Activated CD4-positive, alpha-beta memory T cell treated with anti-CD3 and anti-CD28 coated beads for 36 hours (primary cell): ENCODE measurements at regions of chr9 and their contacts with region 1.

Region 1: GRCh38 chr9:19048966-19049916 is at the start of gene RRAGA:
- DNase-seq: peak; percentile 96
- H3K4me3 Mint-ChIP-seq: peak within 1 kb of the TSS; percentile 93
- H3K27ac Mint-ChIP-seq: peak within 1 kb of the TSS; percentile 98
- H3K4me1 Mint-ChIP-seq: peaks cover 37% of the 10 kb centered on the region
- H3K27me3 Mint-ChIP-seq: no peaks in the 10 kb centered on the region
- total RNA-seq, gene RRAGA: 43.8 to 45.5 TPM

Region 2: DNA sequence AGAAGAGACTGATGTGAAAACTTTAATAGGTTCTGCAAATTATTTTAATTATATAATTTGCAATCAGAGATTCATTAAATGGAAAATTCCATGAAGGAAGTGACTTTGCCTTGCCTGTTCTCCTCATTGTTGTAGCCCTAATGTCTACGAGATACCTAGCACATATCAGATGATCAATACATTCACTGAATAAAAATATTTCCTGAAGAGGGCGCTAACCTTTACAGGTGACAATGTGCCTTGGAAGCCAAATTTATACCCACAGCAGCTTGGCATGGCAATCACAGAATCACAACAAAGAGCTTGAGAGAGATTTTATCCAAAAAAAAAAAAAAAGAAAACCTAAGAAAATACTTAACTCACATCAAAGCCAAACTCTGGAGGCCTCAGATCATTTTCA is 36.1 kb after region 1 on chr9:
- CTCF ChIA-PET with region 1: interaction called, 4 read pairs
- POLR2A ChIA-PET with region 1: interaction called, 3 read pairs
- intact Hi-C with region 1: loop called (anchors 5 kb)
- DNase-seq: no peak
- H3K4me3 Mint-ChIP-seq: no peak overlapping the region
- H3K27ac Mint-ChIP-seq: no peak overlapping the region
- H3K4me1 Mint-ChIP-seq: no peaks in the 10 kb centered on the region
- H3K27me3 Mint-ChIP-seq: no peaks in the 10 kb centered on the region

Region 3: DNA sequence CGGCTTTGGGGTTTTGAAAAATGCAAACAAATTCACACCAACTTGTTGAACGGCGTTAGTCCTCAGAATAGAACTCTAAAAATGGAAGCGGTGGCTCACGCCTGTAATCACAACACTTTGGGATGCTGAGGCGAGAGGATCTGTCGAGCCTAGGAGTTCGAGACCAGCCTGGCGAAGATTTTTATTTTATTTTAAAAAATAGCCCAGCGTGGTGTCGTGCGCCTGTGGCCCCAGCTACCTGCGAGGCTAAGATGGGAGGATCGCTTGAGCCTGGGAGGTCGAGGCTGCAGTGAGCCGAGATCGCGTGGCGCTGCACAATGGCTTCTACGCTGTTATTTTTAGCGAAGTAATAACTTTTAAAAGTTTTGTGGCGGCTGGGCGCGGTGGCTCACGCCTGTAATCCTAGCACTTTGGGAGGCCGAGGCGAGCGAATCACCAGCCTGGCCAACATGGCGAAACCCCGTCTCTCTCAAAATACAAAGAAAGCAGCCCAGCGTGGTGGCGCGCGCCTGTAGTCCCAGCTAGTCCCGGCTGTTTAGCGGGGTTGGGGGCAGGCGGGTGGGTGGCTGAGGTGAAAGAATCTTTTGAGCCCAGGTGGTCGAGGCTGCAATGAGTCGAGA is 78.8 kb after region 1 on chr9:
- CTCF ChIA-PET with region 1: interaction called, 6 read pairs
- POLR2A ChIA-PET with region 1: no interaction called
- intact Hi-C with region 1: loop called (anchors 2 kb)
- DNase-seq: peak; percentile 48
- H3K4me3 Mint-ChIP-seq: peak overlapping the region; percentile 93
- H3K27ac Mint-ChIP-seq: peak overlapping the region; percentile 97
- H3K4me1 Mint-ChIP-seq: peaks cover 56% of the 10 kb centered on the region
- H3K27me3 Mint-ChIP-seq: no peaks in the 10 kb centered on the region

Region 4: DNA sequence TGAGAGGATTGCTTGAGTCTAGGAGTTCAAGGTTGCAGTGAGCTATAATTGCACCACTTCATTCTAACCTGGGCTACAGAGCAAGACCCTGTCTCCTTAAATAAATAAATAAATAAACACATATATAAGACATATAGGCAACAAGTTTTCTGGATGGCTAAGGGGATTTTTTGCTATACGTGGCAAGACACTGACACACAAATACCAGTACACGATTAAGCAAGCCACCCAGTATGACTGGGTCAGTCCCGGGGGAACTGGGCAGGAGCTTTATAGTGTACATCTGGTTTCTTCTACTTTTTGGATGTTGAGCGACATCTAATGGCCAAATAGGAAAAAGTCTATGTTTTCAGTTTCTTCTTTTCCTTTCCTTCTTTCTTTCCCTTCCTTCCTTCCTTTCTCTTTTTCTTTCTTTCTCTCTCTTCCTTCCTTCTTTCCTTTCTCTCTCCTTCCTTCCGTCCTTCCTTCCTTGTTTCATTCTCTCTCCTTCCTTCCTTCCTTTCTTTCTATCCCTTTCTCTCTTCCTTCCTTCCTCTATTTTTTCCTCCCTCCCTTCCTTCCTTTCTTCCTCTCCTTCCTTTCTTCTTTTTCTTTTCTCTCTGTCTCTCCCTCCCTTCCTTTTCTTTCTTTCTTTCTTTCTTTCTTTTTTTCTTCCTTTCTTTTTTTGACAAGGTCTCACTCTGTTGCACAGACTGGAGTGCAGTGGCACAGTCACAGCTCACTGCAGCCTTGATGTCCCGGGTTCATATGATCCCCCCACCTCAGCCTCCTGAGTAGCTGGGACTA is 125.1 kb after region 1 on chr9:
- CTCF ChIA-PET with region 1: interaction called, 36 read pairs
- POLR2A ChIA-PET with region 1: interaction called, 3 read pairs
- intact Hi-C with region 1: loop called (anchors 1 kb)
- DNase-seq: peak; percentile 79
- H3K4me3 Mint-ChIP-seq: no peak overlapping the region
- H3K27ac Mint-ChIP-seq: no peak overlapping the region
- H3K4me1 Mint-ChIP-seq: peaks cover 22% of the 10 kb centered on the region
- H3K27me3 Mint-ChIP-seq: no peaks in the 10 kb centered on the region

Region 5: GRCh38 chr9:19379697-19380046 is 330.4 kb after region 1 on chr9:
- CTCF ChIA-PET with region 1: interaction called, 9 read pairs
- POLR2A ChIA-PET with region 1: interaction called, 14 read pairs
- intact Hi-C with region 1: loop called (anchors 1 kb)
- DNase-seq: no peak
- H3K4me3 Mint-ChIP-seq: peak overlapping the region; percentile 100
- H3K27ac Mint-ChIP-seq: peak overlapping the region; percentile 100
- H3K4me1 Mint-ChIP-seq: peaks cover 50% of the 10 kb centered on the region
- H3K27me3 Mint-ChIP-seq: peaks cover 3% of the 10 kb centered on the region

Region 6: GRCh38 chr9:19464764-19465585 is 415.7 kb after region 1 on chr9:
- CTCF ChIA-PET with region 1: interaction called, 10 read pairs
- POLR2A ChIA-PET with region 1: no interaction called
- intact Hi-C with region 1: no loop called
- DNase-seq: peak; percentile 73
- H3K4me3 Mint-ChIP-seq: peak overlapping the region; percentile 72
- H3K27ac Mint-ChIP-seq: no peak overlapping the region
- H3K4me1 Mint-ChIP-seq: peaks cover 7% of the 10 kb centered on the region
- H3K27me3 Mint-ChIP-seq: no peaks in the 10 kb centered on the region